ENCODE measurements at regions of chr11 and their contacts with region 1.

Region 1: DNA sequence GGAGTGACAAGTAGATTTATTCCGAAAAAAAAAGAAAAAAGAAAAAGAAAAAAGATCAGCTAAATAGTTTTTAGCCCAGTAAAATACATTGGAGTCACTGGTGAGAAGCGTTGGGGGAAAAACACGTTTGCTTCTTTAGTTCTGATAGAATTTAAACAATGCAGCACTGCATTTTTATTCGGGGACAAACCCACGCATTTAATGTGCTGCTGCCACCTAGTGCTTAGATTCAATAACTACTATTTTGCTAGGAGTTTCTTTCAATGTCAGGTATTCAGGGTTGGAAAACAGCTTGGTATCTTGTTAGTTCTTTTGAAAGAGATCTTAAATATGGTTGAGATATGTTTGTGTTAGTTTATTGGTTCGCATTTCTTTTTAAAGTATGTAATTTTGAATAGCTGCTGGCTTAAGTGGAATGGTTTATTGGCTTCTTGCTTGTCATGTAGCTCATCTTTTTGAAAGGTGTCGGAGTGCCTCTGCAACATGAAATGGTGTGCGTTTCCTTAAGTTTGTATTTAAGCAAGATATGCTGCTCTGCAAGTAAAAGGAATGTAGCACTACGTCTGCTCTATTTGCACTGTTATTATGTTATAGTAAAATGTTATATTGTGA is 41.9 kb downstream of the SVIP start:
- DNase-seq: peak in 10 of 14 experiments; percentile 1 to 60 (median 8)
- ATAC-seq: peak; percentile 55
- H3K4me3 ChIP-seq: no peak overlapping the region
- H3K4me3 Mint-ChIP-seq: no peak overlapping the region
- H3K27ac ChIP-seq: no peak overlapping the region
- H3K27ac Mint-ChIP-seq: no peak overlapping the region
- H3K4me1 ChIP-seq: no peaks in the 10 kb centered on the region
- H3K4me1 Mint-ChIP-seq: no peaks in the 10 kb centered on the region
- H3K27me3 ChIP-seq: no peaks in the 10 kb centered on the region
- H3K27me3 Mint-ChIP-seq: peaks cover 11% of the 10 kb centered on the region
- CTCF ChIP-seq: peak; percentile 94

Region 2: GRCh38 chr11:22244986-22245592 is 542.6 kb before region 1 on chr11:
- CTCF ChIA-PET with region 1: no interaction called
- POLR2A ChIA-PET with region 1: no interaction called
- intact Hi-C with region 1: loop called (anchors 1 to 5 kb)
- DNase-seq: peak in 5 of 14 experiments; percentile 0 to 31 (median 15)
- ATAC-seq: peak; percentile 46
- H3K4me3 ChIP-seq: no peak overlapping the region
- H3K4me3 Mint-ChIP-seq: no peak overlapping the region
- H3K27ac ChIP-seq: no peak overlapping the region
- H3K27ac Mint-ChIP-seq: no peak overlapping the region
- H3K4me1 ChIP-seq: no peaks in the 10 kb centered on the region
- H3K4me1 Mint-ChIP-seq: no peaks in the 10 kb centered on the region
- H3K27me3 ChIP-seq: no peaks in the 10 kb centered on the region
- H3K27me3 Mint-ChIP-seq: peaks cover 22% of the 10 kb centered on the region
- CTCF ChIP-seq: peak; percentile 58

Region 3: DNA sequence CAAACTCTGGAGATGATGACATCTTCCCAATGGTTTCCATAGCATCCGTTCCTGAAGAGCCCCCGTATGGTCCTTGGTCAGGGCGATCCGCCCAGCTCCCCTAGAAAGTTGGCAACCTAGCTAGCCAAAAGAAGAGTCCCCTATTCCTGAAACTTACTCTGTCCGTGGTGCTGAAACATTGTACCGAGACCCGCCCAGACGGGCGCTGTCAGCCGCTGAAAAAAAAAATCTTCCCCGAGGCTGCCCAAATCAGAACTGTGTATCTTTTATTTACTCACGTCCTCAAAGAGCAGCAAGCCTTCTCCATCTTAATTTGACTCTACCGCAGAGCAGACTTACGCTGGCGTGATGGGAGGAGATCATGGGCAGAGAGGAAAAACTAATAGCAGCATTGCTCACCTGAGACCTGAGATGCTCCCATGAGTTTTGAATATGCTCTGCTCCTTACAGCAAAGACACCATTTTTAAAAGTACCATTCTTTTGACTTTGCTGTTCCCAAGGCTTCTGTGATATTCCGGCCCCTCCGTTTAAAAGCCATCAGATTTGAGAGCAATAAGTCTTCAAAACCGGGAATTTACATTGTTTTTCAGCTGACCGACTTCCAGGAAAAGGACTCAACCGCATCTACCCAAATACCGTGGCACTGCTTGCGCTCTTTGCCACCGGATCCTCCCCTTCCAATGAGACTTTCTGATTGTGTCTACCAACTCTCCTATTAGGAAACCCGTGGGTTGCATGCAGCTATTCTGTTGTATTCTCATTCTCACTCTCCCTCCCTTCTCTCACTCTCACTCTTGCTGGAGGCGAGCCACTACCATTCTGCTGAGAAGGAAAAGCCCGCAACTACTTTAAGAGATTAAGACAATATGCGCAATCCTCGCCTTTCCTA is 449.8 kb before region 1 on chr11 and contains the start of gene SLC17A6:
- CTCF ChIA-PET with region 1: interaction called, 3 read pairs
- POLR2A ChIA-PET with region 1: interaction called, 4 read pairs
- intact Hi-C with region 1: loop called (anchors 1 kb)
- DNase-seq: peak in 2 of 14 experiments; percentile 11 to 17
- ATAC-seq: peak; percentile 26
- H3K4me3 ChIP-seq: no peak within 1 kb of the TSS
- H3K4me3 Mint-ChIP-seq: no peak within 1 kb of the TSS
- H3K27ac ChIP-seq: no peak within 1 kb of the TSS
- H3K27ac Mint-ChIP-seq: no peak within 1 kb of the TSS
- H3K4me1 ChIP-seq: no peaks in the 10 kb centered on the region
- H3K4me1 Mint-ChIP-seq: peaks cover 17% of the 10 kb centered on the region
- H3K27me3 ChIP-seq: peaks cover 54 to 63% of the 10 kb centered on the region in 2 experiments
- H3K27me3 Mint-ChIP-seq: peaks cover 74% of the 10 kb centered on the region
- CTCF ChIP-seq: no peak
- total RNA-seq, gene SLC17A6: not detected

Region 4: GRCh38 chr11:22670830-22671229 is 116.8 kb before region 1 on chr11:
- CTCF ChIA-PET with region 1: no interaction called
- POLR2A ChIA-PET with region 1: no interaction called
- intact Hi-C with region 1: loop called (anchors 5 kb)
- DNase-seq: peak in 2 of 14 experiments; percentile 20 to 22
- ATAC-seq: peak; percentile 54
- H3K4me3 ChIP-seq: no peak overlapping the region
- H3K4me3 Mint-ChIP-seq: no peak overlapping the region
- H3K27ac ChIP-seq: no peak overlapping the region
- H3K27ac Mint-ChIP-seq: no peak overlapping the region
- H3K4me1 ChIP-seq: peaks cover 10% of the 10 kb centered on the region
- H3K4me1 Mint-ChIP-seq: peaks cover 15% of the 10 kb centered on the region
- H3K27me3 ChIP-seq: peaks cover 24 to 44% of the 10 kb centered on the region in 2 experiments
- H3K27me3 Mint-ChIP-seq: peaks cover 58% of the 10 kb centered on the region
- CTCF ChIP-seq: peak; percentile 18

Measured in CD4-positive, alpha-beta T cell (primary cell).